HEK293 (cell line): ENCODE measurements at regions of chr2 and their contacts with region 1.

Region 1: DNA sequence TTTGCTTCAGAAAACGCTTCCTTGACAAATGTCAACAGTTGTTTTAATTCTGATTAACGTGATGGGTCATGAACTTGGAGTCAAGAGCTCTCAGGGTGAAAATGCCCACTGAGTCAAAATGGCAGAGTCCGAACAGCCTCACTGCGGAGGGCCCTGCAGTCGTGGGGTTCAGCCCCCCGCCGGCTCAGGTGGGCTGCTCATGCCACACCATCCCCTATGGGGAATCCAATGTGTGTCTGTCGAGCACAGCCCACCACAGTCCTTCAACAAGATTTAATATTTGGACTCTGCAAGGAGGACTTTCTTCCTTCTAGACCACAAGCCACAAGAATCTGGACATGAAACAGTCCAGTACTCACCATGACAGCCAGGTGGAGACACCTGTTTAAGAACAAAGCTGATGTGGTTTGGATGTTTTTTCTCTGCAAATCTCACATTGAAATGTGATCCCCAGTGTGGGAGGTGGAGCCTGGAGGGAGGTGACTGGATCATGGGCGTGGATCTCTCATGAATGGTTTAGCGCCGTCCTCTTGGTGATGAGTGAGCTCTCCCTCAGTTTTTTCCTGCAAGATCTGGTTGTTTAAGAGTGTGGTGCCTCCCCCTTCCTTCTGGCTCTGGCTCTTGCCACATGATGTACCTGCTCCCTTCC is 201.0 kb downstream of the NDUFA10 start:
- H3K4me3 ChIP-seq: no peak overlapping the region
- H3K27ac ChIP-seq: no peak overlapping the region
- H3K4me1 ChIP-seq: peaks cover 8% of the 10 kb centered on the region
- CTCF ChIP-seq: no peak

Region 2: DNA sequence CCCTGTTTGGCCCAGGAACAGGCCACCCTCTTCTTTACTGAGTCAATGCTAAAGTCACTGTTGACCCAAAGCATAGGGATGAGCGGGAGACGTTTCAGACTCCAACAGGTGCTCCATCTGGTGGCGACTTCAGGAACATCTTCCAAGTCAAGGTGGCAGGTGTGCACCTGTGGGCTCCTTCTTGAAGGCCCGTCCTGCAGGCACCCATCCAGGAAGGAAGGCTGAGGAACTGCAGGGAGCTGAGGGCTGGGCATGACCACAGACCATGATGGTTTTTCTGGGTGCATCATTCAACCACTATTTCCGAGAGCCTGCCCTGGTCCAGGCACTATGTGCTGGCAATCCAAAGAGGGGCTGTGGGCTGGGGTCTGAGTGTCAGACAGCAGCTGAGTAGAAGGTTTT is 58.2 kb after region 1 on chr2:
- CTCF ChIA-PET with region 1: interaction called, 10 read pairs
- POLR2A ChIA-PET with region 1: no interaction called
- H3K4me3 ChIP-seq: no peak overlapping the region
- H3K27ac ChIP-seq: no peak overlapping the region; the same call in 1 of the 2 replicates
- H3K4me1 ChIP-seq: peaks cover 6% of the 10 kb centered on the region
- CTCF ChIP-seq: no peak